Motor neuron (in vitro differentiated cells): ENCODE measurements at regions of chr13 and their contacts with region 1.

Region 1: DNA sequence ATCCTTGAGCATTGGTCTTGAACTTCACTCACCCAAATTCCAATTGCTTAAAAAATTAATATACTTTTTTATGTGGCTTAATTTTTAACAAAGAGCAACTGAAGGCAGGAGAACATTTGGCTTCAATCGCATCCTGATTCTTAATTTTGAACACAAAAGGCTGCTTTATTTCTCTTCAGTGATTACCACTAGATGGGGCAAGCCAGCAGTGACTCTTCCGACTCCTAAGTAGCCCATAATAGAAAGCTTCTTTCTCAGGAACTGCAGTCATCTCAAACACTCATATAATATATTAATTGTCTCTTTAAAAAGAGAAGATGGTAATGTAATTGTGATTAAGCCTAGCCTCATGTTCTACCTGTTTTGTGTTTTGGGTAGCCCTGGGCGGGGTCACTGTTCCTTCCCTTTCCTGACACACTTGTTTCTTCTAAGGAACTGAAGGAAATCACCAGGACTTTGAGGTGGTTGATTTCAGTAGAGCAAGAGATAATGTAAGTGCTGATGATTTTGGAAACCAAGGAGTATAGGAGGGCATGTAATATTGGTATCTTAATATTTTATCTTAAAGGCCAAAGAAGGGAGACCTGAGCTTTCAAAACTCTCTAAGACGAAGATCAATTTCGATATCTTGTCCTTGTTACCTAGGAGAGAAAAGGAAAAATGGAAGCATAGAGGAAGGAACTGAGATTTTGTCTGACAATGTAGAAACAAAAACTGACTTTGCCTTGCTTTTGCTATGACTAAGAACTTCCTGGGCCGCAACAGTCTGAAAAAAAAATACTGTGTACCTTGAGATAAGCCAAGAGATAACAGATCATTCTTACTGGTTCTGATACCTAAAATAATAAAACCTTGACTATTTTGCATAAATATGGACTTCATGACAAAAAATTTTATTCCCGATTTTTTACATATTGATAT is 73.1 kb downstream of the TNFSF13B start:
- ATAC-seq: peak in 5 of 8 experiments; percentile 38 to 56 (median 40)
- H3K4me3 ChIP-seq: no peak overlapping the region
- H3K27ac ChIP-seq: no peak overlapping the region
- H3K4me1 ChIP-seq: peaks cover 0 to 9% of the 10 kb centered on the region in 2 donors

Region 2: DNA sequence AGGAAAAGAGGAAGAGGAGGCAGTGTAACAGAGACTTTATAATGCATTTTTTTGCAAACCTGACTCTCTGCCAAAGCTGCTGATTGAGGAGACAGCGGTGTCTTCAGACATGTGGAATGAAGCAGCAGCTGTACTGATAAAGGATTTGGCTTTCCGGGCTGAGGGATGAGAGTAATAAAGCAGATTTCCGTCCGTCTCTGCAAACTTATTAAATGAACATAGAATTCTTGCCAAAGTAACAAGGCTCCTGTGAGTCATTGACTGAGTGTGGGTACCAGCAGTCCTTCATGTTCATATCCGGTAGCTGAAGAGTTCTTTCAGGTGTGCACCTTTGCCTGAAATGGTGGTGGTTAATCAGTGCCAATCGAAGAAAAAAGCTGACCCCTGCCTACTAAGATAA is 239.9 kb before region 1 on chr13:
- in situ Hi-C with region 1: no loop called
- ATAC-seq: peak in 1 of 8 experiments; percentile 18
- H3K4me3 ChIP-seq: no peak overlapping the region
- H3K27ac ChIP-seq: no peak overlapping the region
- H3K4me1 ChIP-seq: peaks cover 0 to 10% of the 10 kb centered on the region in 2 donors

Region 3: GRCh38 chr13:108915634-108916512 is 573.2 kb after region 1 on chr13:
- in situ Hi-C with region 1: loop called in 1 of 9 experiments (anchors 25 kb)
- ATAC-seq: peak; percentile 11 to 97 (median 88)
- H3K4me3 ChIP-seq: peak overlapping the region in 2 of 5 donors; percentile 9 to 11
- H3K27ac ChIP-seq: peak overlapping the region in 1 of 2 donors; percentile 32
- H3K4me1 ChIP-seq: peaks cover 10 to 13% of the 10 kb centered on the region in 2 donors